ENCODE measurements at regions of chr10 and their contacts with region 1.

Region 1: DNA sequence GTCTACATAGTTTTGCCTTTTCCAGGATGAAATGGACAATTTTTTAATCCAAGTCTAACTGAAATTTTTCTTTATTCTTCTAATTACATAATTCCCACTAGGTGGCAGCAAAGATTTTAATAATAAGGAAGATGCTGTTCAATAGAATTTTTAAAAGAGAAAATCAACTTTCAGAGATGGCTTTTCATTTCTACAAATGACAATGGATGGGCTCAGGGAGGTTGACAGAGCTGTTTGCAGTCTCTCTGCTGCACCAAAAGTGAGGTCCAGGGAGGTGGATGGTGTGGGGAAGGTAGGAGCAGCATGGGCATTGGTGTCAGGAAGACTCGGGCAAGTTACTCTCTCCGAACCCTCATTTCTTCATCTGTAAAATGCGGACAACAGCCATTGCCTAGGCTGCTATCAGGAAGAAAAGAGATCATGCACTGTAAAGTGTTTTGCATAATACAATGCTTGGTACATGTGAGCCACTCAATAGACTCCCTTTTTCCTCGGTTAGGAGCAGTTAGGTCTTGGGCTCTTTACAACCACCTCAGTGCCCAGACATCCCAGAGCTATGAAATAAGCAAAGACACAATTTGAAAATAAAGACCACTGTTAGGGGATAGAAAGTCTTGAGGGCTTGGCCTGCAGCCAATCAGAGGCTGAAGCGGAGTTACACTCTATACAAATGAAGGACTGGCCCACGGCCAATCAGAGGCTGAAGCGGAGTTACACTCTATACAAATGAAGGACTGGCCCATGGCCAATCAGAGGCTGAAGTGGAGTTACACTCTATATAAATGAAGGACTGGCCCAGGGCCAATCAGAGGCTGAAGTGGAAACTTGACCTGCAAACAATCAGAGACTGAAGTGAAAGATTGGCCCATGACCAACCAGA is 107.1 kb downstream of the ABLIM1 start:
- DNase-seq: no peak
- H3K4me3 ChIP-seq: no peak overlapping the region
- H3K27ac ChIP-seq: no peak overlapping the region
- H3K4me1 ChIP-seq: peaks cover 7% of the 10 kb centered on the region
- H3K27me3 ChIP-seq: no peaks in the 10 kb centered on the region
- CTCF ChIP-seq: peak; percentile 25 to 36

Region 2: GRCh38 chr10:113704637-113705343 is 846.2 kb before region 1 on chr10:
- CTCF ChIA-PET with region 1: no interaction called
- dilution Hi-C with region 1: no loop called
- in situ Hi-C with region 1: no loop called
- intact Hi-C with region 1: loop called (anchors 10 kb)
- DNase-seq: peak; percentile 4
- H3K4me3 ChIP-seq: no peak overlapping the region
- H3K27ac ChIP-seq: no peak overlapping the region
- H3K4me1 ChIP-seq: peaks cover 4% of the 10 kb centered on the region
- H3K27me3 ChIP-seq: no peaks in the 10 kb centered on the region
- CTCF ChIP-seq: peak; percentile 64 to 67

Region 3: GRCh38 chr10:114470956-114471905 is 79.8 kb before region 1 on chr10:
- CTCF ChIA-PET with region 1: interaction called, 10 read pairs
- dilution Hi-C with region 1: no loop called
- in situ Hi-C with region 1: loop called (anchors 5 kb)
- intact Hi-C with region 1: loop called (anchors 1 kb)
- DNase-seq: peak; percentile 50
- H3K4me3 ChIP-seq: no peak overlapping the region
- H3K27ac ChIP-seq: no peak overlapping the region
- H3K4me1 ChIP-seq: no peaks in the 10 kb centered on the region
- H3K27me3 ChIP-seq: no peaks in the 10 kb centered on the region
- CTCF ChIP-seq: peak; percentile 86 to 89

Region 4: GRCh38 chr10:114631666-114632417 is 80.8 kb after region 1 on chr10:
- CTCF ChIA-PET with region 1: no interaction called
- dilution Hi-C with region 1: no loop called
- in situ Hi-C with region 1: no loop called
- intact Hi-C with region 1: loop called (anchors 5 kb)
- DNase-seq: no peak
- H3K4me3 ChIP-seq: peak overlapping the region; percentile 43 to 69 (median 61)
- H3K27ac ChIP-seq: peak overlapping the region; percentile 59
- H3K4me1 ChIP-seq: peaks cover 57% of the 10 kb centered on the region
- H3K27me3 ChIP-seq: no peaks in the 10 kb centered on the region
- CTCF ChIP-seq: no peak

Region 5: GRCh38 chr10:114648368-114648767 is 97.4 kb after region 1 on chr10:
- CTCF ChIA-PET with region 1: no interaction called
- dilution Hi-C with region 1: no loop called
- in situ Hi-C with region 1: no loop called
- intact Hi-C with region 1: no loop called
- DNase-seq: peak; percentile 90
- H3K4me3 ChIP-seq: no peak overlapping the region
- H3K27ac ChIP-seq: no peak overlapping the region
- H3K4me1 ChIP-seq: peaks cover 19% of the 10 kb centered on the region
- H3K27me3 ChIP-seq: no peaks in the 10 kb centered on the region
- CTCF ChIP-seq: no peak

Region 6: GRCh38 chr10:114703377-114704107 is 152.5 kb after region 1 on chr10:
- CTCF ChIA-PET with region 1: no interaction called
- dilution Hi-C with region 1: loop called (anchors 10 kb)
- in situ Hi-C with region 1: loop called (anchors 5 kb)
- intact Hi-C with region 1: loop called (anchors 1 kb)
- DNase-seq: no peak
- H3K4me3 ChIP-seq: no peak overlapping the region
- H3K27ac ChIP-seq: no peak overlapping the region
- H3K4me1 ChIP-seq: peaks cover 4% of the 10 kb centered on the region
- H3K27me3 ChIP-seq: no peaks in the 10 kb centered on the region
- CTCF ChIP-seq: peak; percentile 59 to 83

Region 7: DNA sequence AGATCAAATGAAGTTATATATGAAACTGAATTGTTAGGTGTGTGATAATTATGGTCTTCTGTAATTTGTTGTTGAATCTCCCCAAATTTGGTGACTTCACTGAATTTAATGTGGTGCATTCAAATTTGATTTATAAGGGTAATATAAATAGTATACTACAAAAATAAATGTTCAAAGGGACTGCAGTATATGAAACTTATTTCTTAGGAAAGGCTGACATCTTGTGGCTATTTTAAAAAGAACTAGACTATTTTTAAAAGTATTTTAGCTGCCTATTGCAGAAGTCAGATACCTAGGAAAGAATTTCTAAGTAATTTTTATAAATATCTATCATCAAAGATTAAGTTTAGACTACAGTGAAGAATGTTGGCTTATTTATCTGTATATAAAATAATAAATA is 578.8 kb after region 1 on chr10:
- CTCF ChIA-PET with region 1: no interaction called
- dilution Hi-C with region 1: no loop called
- in situ Hi-C with region 1: loop called in 1 of 2 experiments (anchors 10 kb)
- intact Hi-C with region 1: no loop called
- DNase-seq: peak; percentile 4
- H3K4me3 ChIP-seq: no peak overlapping the region
- H3K27ac ChIP-seq: no peak overlapping the region
- H3K4me1 ChIP-seq: no peaks in the 10 kb centered on the region
- H3K27me3 ChIP-seq: no peaks in the 10 kb centered on the region
- CTCF ChIP-seq: peak in 1 of 2 donors; percentile 11

Measured in mammary epithelial cell (primary cell).